H1 (cell line): ENCODE measurements at regions of chr2 and their contacts with region 1.

Region 1: DNA sequence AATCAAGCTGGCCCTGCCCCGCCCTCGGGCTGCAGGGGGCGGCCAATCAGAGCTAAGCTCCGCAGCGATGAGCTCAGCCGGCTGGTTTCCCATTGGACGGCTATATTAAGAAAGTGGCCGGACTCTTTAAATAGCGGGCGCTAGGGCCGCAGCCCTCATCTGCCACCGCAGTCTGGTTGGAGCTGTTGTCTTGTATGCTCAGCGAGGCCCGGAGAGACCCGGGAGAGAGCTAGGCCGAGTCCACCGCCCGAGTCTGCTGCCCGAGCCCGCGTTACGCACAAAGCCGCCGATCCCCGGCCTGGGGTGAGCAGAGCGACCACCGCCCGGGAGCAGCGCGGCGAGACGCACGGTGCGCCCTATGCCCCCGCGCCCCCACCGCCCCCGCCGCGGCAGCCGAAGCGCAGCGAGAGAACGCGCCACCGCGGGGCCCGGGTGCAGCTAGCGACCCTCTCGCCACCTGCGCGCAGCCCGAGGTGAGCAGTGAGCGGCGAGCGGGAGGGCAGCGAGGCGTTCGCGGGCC is at the start of gene RHOB:
- DNase-seq: peak; percentile 94 to 95
- H3K4me3 ChIP-seq: peak within 1 kb of the TSS; percentile 61 to 73 (median 66)
- H3K27ac ChIP-seq: no peak within 1 kb of the TSS; the same call in 1 of the 2 replicates
- H3K4me1 ChIP-seq: peaks cover 9 to 16% (median 13%) of the 10 kb centered on the region in 4 experiments
- H3K27me3 ChIP-seq: peaks cover 15 to 49% (median 37%) of the 10 kb centered on the region in 4 experiments
- CTCF ChIP-seq: no peak
- EP300 ChIP-seq: no peak
- POLR2A ChIP-seq: peak; percentile 96 to 99
- RAD21 ChIP-seq: 0 out of 4 replicates have a peak, but pooled peaks of 1 of the 2 experiments have one; percentile 2
- total RNA-seq, gene RHOB: 9.5 and 13.5 TPM in 2 replicates

Region 2: GRCh38 chr2:20419007-20419576 is 27.9 kb before region 1 on chr2:
- CTCF ChIA-PET with region 1: interaction called, 404 read pairs
- POLR2A ChIA-PET with region 1: interaction called, 14 read pairs
- DNase-seq: no peak
- H3K4me3 ChIP-seq: no peak overlapping the region
- H3K27ac ChIP-seq: no peak overlapping the region
- H3K4me1 ChIP-seq: peaks cover 0 to 4% (median 2%) of the 10 kb centered on the region in 4 experiments; a peak in 2 of 7 replicates
- H3K27me3 ChIP-seq: no peaks in the 10 kb centered on the region
- CTCF ChIP-seq: no peak
- EP300 ChIP-seq: no peak
- POLR2A ChIP-seq: no peak
- RAD21 ChIP-seq: no peak

Region 3: GRCh38 chr2:20487400-20488174 is 40.6 kb after region 1 on chr2:
- CTCF ChIA-PET with region 1: interaction called, 8 read pairs
- POLR2A ChIA-PET with region 1: interaction called, 10 read pairs
- DNase-seq: peak; percentile 7 to 59
- H3K4me3 ChIP-seq: peak overlapping the region in 1 of 4 experiments; percentile 1; a peak in 1 of 8 replicates
- H3K27ac ChIP-seq: no peak overlapping the region
- H3K4me1 ChIP-seq: peaks cover 9 to 16% (median 14%) of the 10 kb centered on the region in 4 experiments
- H3K27me3 ChIP-seq: no peaks in the 10 kb centered on the region
- CTCF ChIP-seq: no peak
- EP300 ChIP-seq: no peak
- POLR2A ChIP-seq: no peak
- RAD21 ChIP-seq: 0 out of 4 replicates have a peak, but pooled peaks of 1 of the 2 experiments have one; percentile 5

Region 4: GRCh38 chr2:20542746-20543468 is 95.9 kb after region 1 on chr2:
- CTCF ChIA-PET with region 1: interaction called, 8 read pairs
- POLR2A ChIA-PET with region 1: interaction called, 19 read pairs
- DNase-seq: no peak
- H3K4me3 ChIP-seq: no peak overlapping the region
- H3K27ac ChIP-seq: no peak overlapping the region
- H3K4me1 ChIP-seq: peaks cover 2 to 8% (median 6%) of the 10 kb centered on the region in 4 experiments; a peak in 6 of 7 replicates
- H3K27me3 ChIP-seq: peaks cover 0 to 2% (median 0%) of the 10 kb centered on the region in 4 experiments; a peak in 2 of 7 replicates
- CTCF ChIP-seq: no peak
- EP300 ChIP-seq: no peak
- POLR2A ChIP-seq: no peak
- RAD21 ChIP-seq: no peak

Region 5: DNA sequence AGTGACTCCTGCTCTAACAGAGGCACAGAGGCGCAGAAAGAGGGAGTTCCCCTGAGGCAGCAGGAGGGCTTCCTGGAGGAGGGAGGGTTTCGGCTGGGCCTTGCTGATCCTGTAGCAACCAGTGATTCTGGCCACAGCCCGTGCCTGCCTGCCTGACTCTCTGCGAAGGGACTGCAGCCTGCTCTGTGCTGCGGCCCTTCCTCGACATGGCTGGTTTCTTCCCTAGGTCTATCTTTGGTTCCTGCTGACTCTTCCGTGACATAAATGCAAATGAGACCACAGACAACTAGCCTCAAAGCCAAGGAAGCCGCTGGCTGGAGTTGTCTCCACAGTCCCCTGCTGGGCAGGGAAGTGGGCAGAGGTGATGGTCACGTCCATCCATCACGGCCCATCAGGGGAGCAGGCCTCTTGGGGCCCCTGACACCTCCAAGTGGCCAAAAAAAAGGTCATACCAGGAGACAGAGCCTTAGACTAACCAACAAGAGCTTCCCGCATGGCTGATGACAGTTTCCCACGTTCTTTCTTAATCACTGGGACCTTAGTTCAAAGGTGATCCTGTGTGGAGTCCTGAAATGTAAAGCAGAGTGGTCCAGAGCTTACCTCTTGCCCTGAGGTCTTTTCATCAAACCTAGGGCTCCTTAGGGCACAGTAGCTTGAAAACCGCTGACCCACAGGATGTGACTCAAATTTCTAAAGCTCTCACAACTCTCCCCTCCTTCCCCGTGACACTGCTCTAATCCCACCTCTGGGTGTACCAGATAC is 148.6 kb after region 1 on chr2:
- CTCF ChIA-PET with region 1: interaction called, 7 read pairs
- POLR2A ChIA-PET with region 1: interaction called, 14 read pairs
- DNase-seq: no peak
- H3K4me3 ChIP-seq: no peak overlapping the region
- H3K27ac ChIP-seq: no peak overlapping the region
- H3K4me1 ChIP-seq: peaks cover 4 to 10% (median 5%) of the 10 kb centered on the region in 4 experiments; a peak in 6 of 7 replicates
- H3K27me3 ChIP-seq: peaks cover 0 to 2% (median 0%) of the 10 kb centered on the region in 4 experiments; a peak in 1 of 7 replicates
- CTCF ChIP-seq: no peak
- EP300 ChIP-seq: no peak
- POLR2A ChIP-seq: no peak
- RAD21 ChIP-seq: no peak

Region 6: DNA sequence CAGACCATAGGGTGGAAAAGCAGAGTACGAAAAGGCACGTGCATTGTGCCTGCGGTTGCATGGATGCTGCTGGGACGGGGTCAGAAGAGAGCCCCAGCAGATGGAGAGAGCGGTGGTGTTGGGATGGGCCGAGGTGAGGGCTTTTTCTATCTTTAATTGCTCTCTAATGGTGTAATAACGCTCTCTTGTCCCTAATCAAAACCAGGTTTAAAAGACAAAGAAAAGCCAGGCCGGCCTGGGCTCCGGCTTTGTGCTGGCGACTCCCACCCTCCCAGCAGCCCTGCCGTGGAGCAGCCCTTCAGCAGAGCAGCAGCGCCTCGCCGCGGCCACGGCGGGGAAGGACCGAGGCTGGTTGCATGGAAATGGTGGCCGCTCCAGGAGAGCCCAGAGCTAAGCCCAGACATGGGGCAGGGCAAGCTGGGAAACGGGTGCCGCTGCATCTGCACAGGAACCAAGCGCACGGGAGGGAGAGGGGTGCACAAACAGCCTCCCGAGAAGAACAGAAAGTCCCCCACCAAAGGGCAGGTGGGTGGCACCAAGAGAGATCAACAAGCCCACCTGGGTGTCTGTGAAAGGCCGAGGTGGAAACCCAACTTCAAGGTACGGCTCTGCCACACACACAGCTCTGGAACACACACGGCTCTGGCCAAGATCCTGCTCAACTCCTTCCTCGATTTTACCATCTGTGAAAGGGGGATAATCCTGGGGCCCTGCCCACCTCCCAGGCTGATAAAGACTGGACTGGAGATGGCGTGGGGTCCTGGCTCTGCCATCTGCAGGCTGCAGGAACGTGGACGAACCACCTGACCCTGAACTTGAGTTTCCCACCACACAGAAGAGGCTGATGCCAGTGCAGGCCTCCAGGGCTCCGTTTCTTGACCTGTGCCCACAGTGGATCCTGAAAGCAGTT is 189.0 kb after region 1 on chr2:
- CTCF ChIA-PET with region 1: interaction called, 367 read pairs
- POLR2A ChIA-PET with region 1: interaction called, 57 read pairs
- DNase-seq: peak; percentile 70 to 96
- H3K4me3 ChIP-seq: no peak overlapping the region
- H3K27ac ChIP-seq: no peak overlapping the region
- H3K4me1 ChIP-seq: peaks cover 0 to 8% (median 3%) of the 10 kb centered on the region in 4 experiments; a peak in 4 of 7 replicates
- H3K27me3 ChIP-seq: no peaks in the 10 kb centered on the region
- CTCF ChIP-seq: peak in 2 of 3 experiments; percentile 98; a peak in 3 of 4 replicates
- EP300 ChIP-seq: no peak
- POLR2A ChIP-seq: no peak
- RAD21 ChIP-seq: peak; percentile 100